Tibial artery (tissue), 4 donors: ENCODE measurements at regions of chr5 and their contacts with region 1.

Region 1: DNA sequence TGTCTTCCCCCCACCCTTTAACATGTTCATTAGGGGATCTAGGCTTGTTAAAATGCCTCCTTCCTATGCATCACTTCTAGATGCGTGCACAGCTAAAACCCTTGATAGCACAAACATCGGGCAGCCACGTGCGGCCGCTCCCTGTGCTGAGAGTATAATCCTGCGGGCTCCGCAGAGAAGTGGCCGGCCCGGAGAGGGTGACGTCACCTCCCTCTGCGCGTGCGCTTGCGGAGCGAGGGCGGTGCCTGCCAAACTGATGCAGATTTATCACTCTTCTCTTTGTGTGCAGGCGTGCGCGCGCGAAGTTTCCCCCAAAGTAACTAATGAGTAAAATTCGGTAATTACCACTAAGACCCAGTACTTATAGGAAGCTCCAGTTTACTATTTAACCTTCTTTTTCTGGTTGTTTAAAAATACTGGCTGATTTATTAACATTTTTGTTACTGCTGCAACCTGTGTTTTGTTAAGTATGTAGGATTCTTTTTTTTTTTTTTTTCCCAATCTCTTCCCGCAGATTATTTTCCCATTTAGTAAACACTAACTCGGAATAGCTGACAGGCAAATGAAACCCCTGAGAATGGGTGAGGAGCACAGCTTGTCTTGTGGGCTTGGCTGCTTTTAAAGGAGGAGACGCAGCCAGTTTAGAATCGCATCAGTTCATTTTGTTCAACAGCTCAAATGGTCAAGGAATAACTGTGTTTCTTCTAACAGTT is 121.6 kb downstream of the TRIO start:
- DNase-seq: peak; percentile 87 to 94
- H3K4me3 ChIP-seq: peak overlapping the region; percentile 15 to 33
- H3K27ac ChIP-seq: no peak overlapping the region
- H3K4me1 ChIP-seq: peaks cover 0 to 68% (median 50%) of the 10 kb centered on the region in 4 donors
- H3K27me3 ChIP-seq: no peaks in the 10 kb centered on the region
- CTCF ChIP-seq: no peak

Region 2: GRCh38 chr5:14208071-14209021 is 56.4 kb before region 1 on chr5:
- intact Hi-C with region 1: loop called (anchors 10 kb)
- DNase-seq: no peak
- H3K4me3 ChIP-seq: no peak overlapping the region
- H3K27ac ChIP-seq: no peak overlapping the region
- H3K4me1 ChIP-seq: peaks cover 0 to 86% (median 28%) of the 10 kb centered on the region in 4 donors
- H3K27me3 ChIP-seq: no peaks in the 10 kb centered on the region
- CTCF ChIP-seq: no peak

Region 3: GRCh38 chr5:14405267-14405666 is 140.5 kb after region 1 on chr5:
- intact Hi-C with region 1: no loop called
- DNase-seq: no peak
- H3K4me3 ChIP-seq: no peak overlapping the region
- H3K27ac ChIP-seq: no peak overlapping the region
- H3K4me1 ChIP-seq: peaks cover 0 to under 1% (median 0%) of the 10 kb centered on the region in 4 donors
- H3K27me3 ChIP-seq: no peaks in the 10 kb centered on the region
- CTCF ChIP-seq: no peak

Region 4: DNA sequence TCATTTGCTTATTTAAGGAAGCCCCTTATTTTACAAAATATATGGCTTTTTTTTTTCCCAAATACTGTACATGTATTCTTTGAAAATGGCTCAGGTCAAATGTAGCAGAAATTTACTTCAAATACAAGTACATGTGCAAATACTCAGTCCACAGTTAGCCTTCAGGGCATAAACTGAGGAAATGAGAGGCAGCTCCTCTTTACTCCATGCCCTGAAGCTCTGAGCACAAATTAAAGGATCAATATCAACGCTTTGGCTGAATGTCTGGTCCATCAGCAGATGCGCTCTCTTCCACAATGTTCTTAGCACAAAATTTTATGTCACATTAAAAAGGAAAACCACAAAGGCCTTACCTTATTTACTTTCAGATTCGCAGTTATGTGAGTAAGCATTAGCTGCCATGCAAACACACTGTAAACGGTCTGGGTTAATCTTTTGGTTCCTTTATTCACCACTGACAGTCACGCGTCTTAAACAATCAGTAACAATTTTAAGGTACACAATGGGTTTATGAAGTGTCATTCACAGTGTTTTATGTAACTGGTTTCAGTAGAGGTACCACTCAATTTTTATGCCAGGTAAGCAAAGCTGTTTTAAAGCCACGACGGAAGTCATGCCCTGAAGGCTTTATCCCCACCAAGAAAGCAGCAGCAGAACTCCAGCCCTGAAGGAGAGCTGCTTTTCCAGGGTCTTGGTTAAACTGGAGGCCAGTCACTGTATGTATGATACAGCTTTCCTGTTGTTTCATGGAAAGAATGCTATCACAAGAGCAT is 503.2 kb after region 1 on chr5:
- intact Hi-C with region 1: no loop called
- DNase-seq: no peak
- H3K4me3 ChIP-seq: no peak overlapping the region
- H3K27ac ChIP-seq: no peak overlapping the region
- H3K4me1 ChIP-seq: peaks cover 0 to 10% (median 0%) of the 10 kb centered on the region in 4 donors
- H3K27me3 ChIP-seq: no peaks in the 10 kb centered on the region
- CTCF ChIP-seq: no peak